SK-N-SH (cell line): ENCODE measurements at regions of chr12 and their contacts with region 1.

Region 1: GRCh38 chr12:54701940-54702592 is 53.9 kb upstream of the DCD start:
- DNase-seq: peak; percentile 22
- H3K4me3 ChIP-seq: no peak overlapping the region; a peak in 1 of 4 replicates
- H3K27ac ChIP-seq: no peak overlapping the region
- H3K4me1 ChIP-seq: no peaks in the 10 kb centered on the region
- H3K27me3 ChIP-seq: no peaks in the 10 kb centered on the region; the same call in 1 of the 2 replicates
- CTCF ChIP-seq: peak; percentile 69
- EP300 ChIP-seq: no peak
- RAD21 ChIP-seq: peak; percentile 65

Region 2: GRCh38 chr12:54749191-54749818 is 47.2 kb after region 1 on chr12:
- CTCF ChIA-PET with region 1: interaction called, 11 read pairs
- POLR2A ChIA-PET with region 1: no interaction called
- DNase-seq: peak; percentile 23
- H3K4me3 ChIP-seq: peak overlapping the region in 1 of 2 experiments; percentile 31; a peak in 1 of 4 replicates
- H3K27ac ChIP-seq: no peak overlapping the region
- H3K4me1 ChIP-seq: no peaks in the 10 kb centered on the region
- H3K27me3 ChIP-seq: no peaks in the 10 kb centered on the region
- CTCF ChIP-seq: peak; percentile 89
- EP300 ChIP-seq: no peak
- RAD21 ChIP-seq: peak; percentile 75

Region 3: GRCh38 chr12:54958048-54958658 is 256.1 kb after region 1 on chr12:
- CTCF ChIA-PET with region 1: interaction called, 12 read pairs
- POLR2A ChIA-PET with region 1: no interaction called
- DNase-seq: peak; percentile 26
- H3K4me3 ChIP-seq: no peak overlapping the region
- H3K27ac ChIP-seq: no peak overlapping the region
- H3K4me1 ChIP-seq: no peaks in the 10 kb centered on the region
- H3K27me3 ChIP-seq: peaks cover 39% of the 10 kb centered on the region; the same call in 1 of the 2 replicates
- CTCF ChIP-seq: peak; percentile 78
- EP300 ChIP-seq: no peak
- RAD21 ChIP-seq: peak; percentile 83